AG04450 (cell line): ENCODE measurements at regions of chrX and their contacts with region 1.

Region 1: DNA sequence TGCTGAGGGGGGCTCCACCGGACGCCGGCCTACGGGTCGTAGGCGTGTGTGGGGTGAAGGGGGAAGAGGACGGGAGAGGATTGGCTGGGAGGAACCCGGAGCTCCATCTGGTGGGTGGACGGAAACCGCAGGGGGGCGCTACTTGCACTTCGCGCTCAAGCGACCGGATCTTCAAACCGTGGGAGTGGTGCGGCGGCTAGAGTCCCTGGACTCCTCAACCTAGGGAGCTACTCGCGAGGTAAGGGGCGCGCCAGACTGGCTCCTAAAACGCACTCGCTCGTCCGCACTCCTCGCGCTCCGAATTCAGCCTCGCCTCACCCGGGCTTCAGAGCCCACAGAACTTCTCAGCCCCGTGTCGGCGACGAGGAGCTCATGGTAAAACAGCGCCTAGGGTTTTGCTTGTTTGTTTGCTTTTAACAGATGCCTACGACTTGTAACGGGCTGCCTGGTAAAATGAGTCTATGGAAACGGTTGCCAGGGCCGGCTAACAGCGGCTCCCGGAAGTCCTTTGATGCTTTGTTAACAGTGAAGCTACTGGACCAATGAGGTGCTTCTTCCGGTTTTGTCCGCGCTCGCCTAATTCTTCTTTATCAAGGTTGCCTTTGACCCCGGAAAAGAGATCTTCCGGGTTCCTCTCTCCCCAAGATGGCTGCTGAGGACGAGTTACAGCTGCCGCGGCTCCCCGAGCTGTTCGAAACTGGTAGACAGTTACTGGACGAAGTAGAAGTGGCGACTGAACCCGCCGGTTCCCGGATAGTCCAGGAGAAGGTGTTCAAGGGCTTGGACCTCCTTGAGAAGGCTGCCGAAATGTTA is at the start of gene IGBP1:
- DNase-seq: peak; percentile 62
- H3K4me3 ChIP-seq: peak within 1 kb of the TSS; percentile 80
- H3K27ac ChIP-seq: peak within 1 kb of the TSS; percentile 94
- H3K27me3 ChIP-seq: no peaks in the 10 kb centered on the region
- CTCF ChIP-seq: peak; percentile 65
- polyA plus RNA-seq, gene IGBP1: 96.1 and 118 TPM in 2 replicates

Region 2: GRCh38 chrX:70030301-70030767 is 103.2 kb before region 1 on chrX:
- CTCF ChIA-PET with region 1: interaction called, 13 read pairs
- POLR2A ChIA-PET with region 1: no interaction called
- DNase-seq: no peak
- H3K4me3 ChIP-seq: no peak overlapping the region
- H3K27ac ChIP-seq: no peak overlapping the region
- H3K27me3 ChIP-seq: no peaks in the 10 kb centered on the region
- CTCF ChIP-seq: peak; percentile 67

Region 3: GRCh38 chrX:70087857-70088630 is 45.5 kb before region 1 on chrX:
- CTCF ChIA-PET with region 1: interaction called, 10 read pairs
- POLR2A ChIA-PET with region 1: interaction called, 3 read pairs
- DNase-seq: no peak
- H3K4me3 ChIP-seq: no peak overlapping the region
- H3K27ac ChIP-seq: peak overlapping the region; percentile 47
- H3K27me3 ChIP-seq: no peaks in the 10 kb centered on the region
- CTCF ChIP-seq: no peak

Region 4: DNA sequence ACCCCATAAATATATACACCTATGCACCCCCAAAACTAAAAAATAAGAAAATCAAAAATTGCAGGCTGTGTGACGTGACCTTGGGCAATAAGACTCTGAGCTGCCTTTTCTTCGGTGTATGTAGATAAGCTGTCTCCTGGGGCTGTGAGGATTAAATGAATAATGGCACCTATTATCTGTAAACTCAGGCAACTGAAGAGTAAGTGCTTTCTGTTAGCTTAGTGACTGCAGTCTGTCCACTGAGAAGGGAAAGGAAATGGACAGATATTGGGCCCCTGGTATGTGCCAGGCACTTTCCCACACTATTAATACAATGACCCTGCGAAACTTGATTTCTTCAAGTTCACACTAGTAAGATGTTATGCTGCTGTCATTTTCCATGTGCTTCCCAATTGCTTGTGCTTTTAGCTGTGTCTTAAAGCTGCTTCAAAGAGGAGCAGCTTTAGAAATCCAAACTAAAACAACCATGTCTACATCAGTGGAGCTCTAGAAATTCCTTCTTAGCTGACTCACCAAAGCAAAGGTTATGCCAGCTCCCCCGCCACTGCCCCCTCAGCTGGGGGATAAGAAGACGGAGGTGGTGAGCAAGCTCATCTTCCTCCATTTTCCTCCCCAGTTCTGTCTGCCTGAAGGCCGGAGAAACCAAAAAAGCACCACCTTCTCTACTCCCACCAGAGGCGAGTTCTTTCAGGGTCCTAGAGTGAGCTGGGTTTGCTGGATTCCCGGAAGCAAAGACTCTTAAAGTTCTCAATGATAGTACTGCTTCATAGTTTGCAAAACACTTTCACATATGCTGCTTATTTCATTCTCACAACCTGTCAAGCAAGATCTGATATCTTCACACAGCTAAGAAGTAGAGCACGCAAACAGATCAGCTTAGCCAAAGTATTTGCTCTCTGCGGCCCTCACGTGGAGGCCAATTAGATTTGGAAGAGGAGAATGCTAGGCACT is 35.0 kb after region 1 on chrX:
- CTCF ChIA-PET with region 1: interaction called, 38 read pairs
- POLR2A ChIA-PET with region 1: interaction called, 20 read pairs
- DNase-seq: peak; percentile 43
- H3K4me3 ChIP-seq: peak overlapping the region; percentile 2; the same call in 1 of the 2 replicates
- H3K27ac ChIP-seq: peak overlapping the region; percentile 82
- H3K27me3 ChIP-seq: no peaks in the 10 kb centered on the region
- CTCF ChIP-seq: no peak

Region 5: GRCh38 chrX:70231666-70232065 is 98.2 kb after region 1 on chrX:
- CTCF ChIA-PET with region 1: no interaction called
- POLR2A ChIA-PET with region 1: no interaction called
- DNase-seq: no peak
- H3K4me3 ChIP-seq: no peak overlapping the region
- H3K27ac ChIP-seq: no peak overlapping the region
- H3K27me3 ChIP-seq: no peaks in the 10 kb centered on the region
- CTCF ChIP-seq: no peak

Region 6: GRCh38 chrX:70289793-70290776 is 156.6 kb after region 1 on chrX and contains the starts of genes KIF4A and PDZD11:
- CTCF ChIA-PET with region 1: interaction called, 17 read pairs
- POLR2A ChIA-PET with region 1: interaction called, 7 read pairs
- DNase-seq: peak; percentile 32
- H3K4me3 ChIP-seq: peak within 1 kb of the TSS; percentile 79
- H3K27ac ChIP-seq: peak within 1 kb of the TSS; percentile 31
- H3K27me3 ChIP-seq: no peaks in the 10 kb centered on the region
- CTCF ChIP-seq: no peak
- polyA plus RNA-seq, gene KIF4A: 6.4 and 8.8 TPM in 2 replicates
- polyA plus RNA-seq, gene PDZD11: 139 and 141 TPM in 2 replicates

Region 7: GRCh38 chrX:70301716-70302115 is 168.2 kb after region 1 on chrX:
- CTCF ChIA-PET with region 1: interaction called, 18 read pairs
- POLR2A ChIA-PET with region 1: no interaction called
- DNase-seq: no peak
- H3K4me3 ChIP-seq: no peak overlapping the region
- H3K27ac ChIP-seq: no peak overlapping the region
- H3K27me3 ChIP-seq: no peaks in the 10 kb centered on the region
- CTCF ChIP-seq: no peak

Region 8: GRCh38 chrX:70433848-70434351 is 300.4 kb after region 1 on chrX:
- CTCF ChIA-PET with region 1: interaction called, 17 read pairs
- POLR2A ChIA-PET with region 1: interaction called, 3 read pairs
- DNase-seq: no peak
- H3K4me3 ChIP-seq: peak overlapping the region; percentile 78
- H3K27ac ChIP-seq: peak overlapping the region; percentile 83
- H3K27me3 ChIP-seq: no peaks in the 10 kb centered on the region
- CTCF ChIP-seq: peak; percentile 59